ENCODE measurements at regions of chr3 and their contacts with region 1.

Region 1: DNA sequence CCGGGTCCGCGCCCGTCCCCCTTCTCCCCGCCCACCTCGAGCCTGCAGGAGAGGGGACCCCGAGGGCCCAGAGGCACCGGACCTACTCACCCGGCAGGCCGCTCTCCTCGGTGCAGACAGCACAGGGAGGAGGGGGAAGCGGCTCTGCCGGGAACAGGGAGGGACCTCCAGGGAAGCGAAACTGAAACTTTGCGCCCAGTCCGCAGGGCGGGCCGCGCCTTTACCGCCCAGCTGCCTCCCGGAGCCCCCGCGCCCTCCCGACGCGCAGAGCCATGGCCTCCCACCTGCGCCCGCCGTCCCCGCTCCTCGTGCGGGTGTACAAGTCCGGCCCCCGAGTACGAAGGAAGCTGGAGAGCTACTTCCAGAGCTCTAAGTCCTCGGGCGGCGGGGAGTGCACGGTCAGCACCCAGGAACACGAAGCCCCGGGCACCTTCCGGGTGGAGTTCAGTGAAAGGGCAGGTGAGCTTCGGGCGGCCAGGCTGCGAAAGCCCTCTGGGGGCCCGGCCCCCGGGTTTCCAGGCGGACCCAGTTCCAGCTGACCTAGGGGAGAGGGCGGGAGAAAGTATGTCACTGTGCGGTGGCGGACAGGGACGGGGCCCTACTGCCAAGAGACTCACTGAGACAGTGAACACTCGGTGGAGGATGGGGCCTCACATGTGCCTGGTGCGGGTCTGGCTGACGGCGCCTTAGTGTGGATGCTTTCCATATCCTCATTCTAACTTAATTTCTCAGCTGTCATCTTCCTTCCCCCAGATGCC is at the starts of genes DTX3L and PARP9:
- DNase-seq: peak; percentile 95
- ATAC-seq: peak; percentile 98
- H3K4me3 ChIP-seq: peak within 1 kb of the TSS; percentile 86
- H3K27ac ChIP-seq: peak within 1 kb of the TSS; percentile 98
- H3K4me1 ChIP-seq: peaks cover 34% of the 10 kb centered on the region
- H3K27me3 ChIP-seq: no peaks in the 10 kb centered on the region
- CTCF ChIP-seq: no peak
- total RNA-seq, gene DTX3L: 67.5 TPM
- total RNA-seq, gene PARP9: 70.8 TPM

Region 2: GRCh38 chr3:122679085-122679881 is 114.9 kb after region 1 on chr3:
- intact Hi-C with region 1: loop called (anchors 5 kb)
- DNase-seq: peak; percentile 83
- ATAC-seq: peak; percentile 78
- H3K4me3 ChIP-seq: peak overlapping the region; percentile 65
- H3K27ac ChIP-seq: peak overlapping the region; percentile 95
- H3K4me1 ChIP-seq: peaks cover 40% of the 10 kb centered on the region
- H3K27me3 ChIP-seq: no peaks in the 10 kb centered on the region
- CTCF ChIP-seq: peak; percentile 82